SK-MEL-5 (cell line): ENCODE measurements at regions of chr15 and their contacts with region 1.

Region 1: DNA sequence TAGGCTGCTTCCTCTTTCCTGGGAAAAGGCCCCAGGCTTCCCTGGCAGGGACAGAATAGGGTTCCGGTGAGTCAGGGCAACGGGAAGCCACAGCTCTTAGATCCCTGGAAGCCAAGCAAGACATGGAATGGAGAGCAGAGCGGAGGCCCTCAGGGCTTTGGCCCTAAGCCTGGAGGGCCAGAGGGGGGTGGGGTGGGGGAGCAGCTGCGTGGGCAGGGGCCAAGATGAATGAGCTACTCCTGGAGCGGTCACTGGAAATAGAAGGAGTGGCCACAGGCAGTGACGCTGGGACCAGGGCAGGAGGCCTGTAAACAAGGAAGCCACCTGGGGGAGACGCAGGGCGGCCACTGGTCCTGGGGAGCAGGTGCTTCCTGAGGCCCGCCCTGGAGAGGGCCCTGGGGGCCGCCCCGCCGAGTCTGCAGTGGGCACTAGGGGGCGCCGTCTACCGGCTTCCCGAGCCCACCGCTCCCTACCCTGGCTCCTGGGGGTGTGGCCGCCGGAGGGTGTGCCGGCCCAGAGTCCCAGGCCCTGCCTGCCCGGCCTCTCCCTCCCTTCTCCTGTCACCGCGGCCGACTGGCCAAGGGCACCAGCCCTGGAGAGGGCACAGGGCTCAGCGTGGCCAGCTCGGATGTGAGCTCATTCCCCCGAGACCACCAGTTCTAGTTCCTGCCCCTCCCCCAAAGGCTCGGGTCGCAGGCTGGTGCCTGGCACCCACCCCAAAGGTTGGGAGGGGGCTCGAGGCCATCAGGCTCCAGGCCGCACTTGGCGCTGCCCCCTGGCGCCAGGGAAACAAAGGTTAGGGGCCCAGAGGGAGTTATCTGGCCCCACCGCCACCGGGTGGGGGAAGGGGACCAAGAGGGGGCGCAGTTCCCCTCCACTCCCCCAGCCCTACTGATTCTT is 12.1 kb downstream of the VPS18 start:
- DNase-seq: peak; percentile 59

Region 2: DNA sequence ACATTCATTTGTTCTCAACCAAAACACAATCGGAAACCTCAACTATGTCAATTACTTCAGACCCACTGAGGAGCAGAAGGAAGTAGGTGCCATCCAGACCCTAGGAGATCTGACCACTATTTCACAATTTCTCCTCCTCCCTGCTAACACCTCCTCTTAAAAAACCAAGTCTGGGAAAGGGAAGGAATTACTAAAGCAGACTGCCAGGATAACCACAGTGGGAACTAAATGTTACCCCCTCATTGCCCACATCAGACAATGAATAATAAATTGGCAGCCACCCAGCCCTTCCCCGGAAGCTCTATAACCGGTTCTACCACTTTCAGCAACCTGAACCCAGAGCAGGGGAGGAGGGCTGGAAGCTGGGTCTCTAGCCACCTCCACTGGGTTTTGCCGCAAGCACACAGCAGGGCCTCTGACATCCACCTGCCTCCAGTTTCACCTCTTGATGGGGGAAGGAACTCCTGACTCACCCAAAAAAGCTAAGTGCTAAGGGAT is 118.9 kb before region 1 on chr15:
- in situ Hi-C with region 1: no loop called
- DNase-seq: no peak

Region 3: GRCh38 chr15:40799523-40799922 is 106.8 kb before region 1 on chr15:
- in situ Hi-C with region 1: no loop called
- DNase-seq: no peak

Region 4: DNA sequence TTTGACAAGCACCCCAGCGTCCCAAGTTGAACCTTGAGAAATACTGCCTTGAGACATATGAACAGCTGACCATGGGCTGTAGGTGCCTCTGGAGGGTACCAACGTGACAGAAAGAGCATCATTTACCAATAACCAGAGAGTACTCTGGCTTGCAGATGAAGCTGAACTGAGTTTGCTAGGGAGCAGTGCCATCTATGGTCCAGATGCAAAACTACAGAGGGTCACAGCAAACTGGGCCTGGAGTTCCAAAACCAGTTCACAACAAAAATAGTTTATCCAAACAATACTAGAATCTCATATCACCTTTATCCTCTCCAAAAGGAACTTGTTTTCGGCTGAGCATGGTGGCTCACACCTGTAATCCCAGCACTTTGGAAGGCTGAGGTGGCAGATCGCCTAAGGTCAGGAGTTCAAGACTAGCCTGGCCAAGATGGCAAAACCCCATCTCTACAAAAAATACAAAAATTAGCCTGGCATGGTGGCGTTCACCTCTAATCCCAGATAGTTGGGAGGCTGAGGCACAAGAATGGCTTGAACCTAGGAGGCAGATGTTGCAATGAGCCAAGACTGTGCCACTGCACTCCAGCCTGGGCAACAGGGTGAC is 116.2 kb after region 1 on chr15:
- in situ Hi-C with region 1: loop called (anchors 25 kb)
- DNase-seq: peak; percentile 71